ENCODE measurements at regions of chr2 and their contacts with region 1.

Region 1: GRCh38 chr2:85453571-85453970 is 35.1 kb downstream of the SH2D6 start:
- DNase-seq: no peak
- ATAC-seq: no peak
- H3K4me3 ChIP-seq: no peak overlapping the region
- H3K27ac ChIP-seq: no peak overlapping the region
- H3K4me1 ChIP-seq: no peaks in the 10 kb centered on the region
- H3K27me3 ChIP-seq: 0 out of 2 replicates have a peak, but pooled peaks cover 3% of the 10 kb centered on the region
- CTCF ChIP-seq: no peak
- POLR2A ChIP-seq: no peak
- RAD21 ChIP-seq: no peak

Region 2: DNA sequence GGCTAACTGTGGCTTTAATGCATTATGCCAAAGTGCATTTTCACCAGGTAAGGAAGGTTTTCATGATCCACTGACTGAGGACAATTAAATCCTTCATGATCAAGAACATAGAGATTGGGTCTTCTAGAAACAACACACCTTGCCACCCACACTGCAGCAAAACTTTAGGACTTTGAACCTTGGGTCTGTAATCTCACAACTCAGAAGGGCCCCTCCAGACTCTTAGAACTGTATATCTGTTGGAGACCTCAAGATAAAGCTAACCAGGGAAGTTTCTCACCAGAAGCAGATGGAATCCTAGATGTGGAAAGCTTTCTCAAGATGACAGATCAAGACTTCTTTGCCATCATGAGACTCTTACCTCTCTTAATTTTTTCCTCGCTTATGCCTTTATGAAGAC is 42.9 kb after region 1 on chr2:
- CTCF ChIA-PET with region 1: no interaction called
- POLR2A ChIA-PET with region 1: no interaction called
- dilution Hi-C with region 1: no loop called
- in situ Hi-C with region 1: no loop called
- intact Hi-C with region 1: loop called (anchors 5 kb)
- DNase-seq: no peak
- ATAC-seq: no peak
- H3K4me3 ChIP-seq: no peak overlapping the region
- H3K27ac ChIP-seq: no peak overlapping the region
- H3K4me1 ChIP-seq: peaks cover 4% of the 10 kb centered on the region; the same call in 1 of the 2 replicates
- H3K27me3 ChIP-seq: no peaks in the 10 kb centered on the region
- CTCF ChIP-seq: no peak
- POLR2A ChIP-seq: no peak
- RAD21 ChIP-seq: no peak

Measured in IMR-90 (cell line).